ENCODE measurements at regions of chr18 and their contacts with region 1.

Region 1: GRCh38 chr18:55763298-55763697 is 175.3 kb upstream of the TCF4 start:
- DNase-seq: no peak
- H3K4me3 ChIP-seq: no peak overlapping the region
- H3K27ac ChIP-seq: no peak overlapping the region
- H3K4me1 ChIP-seq: no peaks in the 10 kb centered on the region
- H3K27me3 ChIP-seq: no peaks in the 10 kb centered on the region
- CTCF ChIP-seq: no peak
- POLR2A ChIP-seq: no peak

Region 2: GRCh38 chr18:55738483-55739114 is 24.7 kb before region 1 on chr18:
- intact Hi-C with region 1: loop called (anchors 2 kb)
- DNase-seq: no peak
- H3K4me3 ChIP-seq: no peak overlapping the region
- H3K27ac ChIP-seq: no peak overlapping the region
- H3K4me1 ChIP-seq: no peaks in the 10 kb centered on the region
- H3K27me3 ChIP-seq: no peaks in the 10 kb centered on the region
- CTCF ChIP-seq: no peak
- POLR2A ChIP-seq: no peak

Region 3: DNA sequence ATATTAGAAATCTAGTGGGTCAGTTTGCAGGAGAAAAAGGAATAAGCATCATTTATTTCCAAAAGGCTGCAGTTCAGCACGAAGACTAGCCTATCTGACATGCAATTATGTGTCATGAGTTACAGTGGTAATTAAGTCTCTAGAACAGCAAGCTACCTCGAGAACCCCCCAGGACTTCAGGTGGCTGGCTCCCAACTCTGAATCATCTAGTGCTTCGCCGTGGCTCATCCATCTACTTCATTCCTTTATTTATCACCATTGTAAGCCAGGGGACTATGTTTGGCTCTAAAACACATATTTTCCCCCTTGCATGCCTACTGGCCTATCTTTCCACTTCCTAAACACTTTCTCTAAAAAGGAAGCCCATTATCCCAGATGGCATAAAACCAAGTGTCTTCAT is 753.5 kb after region 1 on chr18:
- intact Hi-C with region 1: no loop called
- DNase-seq: no peak
- H3K4me3 ChIP-seq: no peak overlapping the region
- H3K27ac ChIP-seq: no peak overlapping the region
- H3K4me1 ChIP-seq: no peaks in the 10 kb centered on the region
- H3K27me3 ChIP-seq: no peaks in the 10 kb centered on the region
- CTCF ChIP-seq: no peak
- POLR2A ChIP-seq: no peak

Measured in breast epithelium (tissue), 4 donors.